ENCODE measurements at regions of chr9 and their contacts with region 1.

Region 1: GRCh38 chr9:7592321-7593316 is 207.0 kb downstream of the DMAC1 start:
- ATAC-seq: peak in 1 of 8 experiments; percentile 33
- H3K4me3 ChIP-seq: no peak overlapping the region
- H3K27ac ChIP-seq: no peak overlapping the region
- H3K4me1 ChIP-seq: peaks cover 0 to 14% of the 10 kb centered on the region in 2 donors

Region 2: GRCh38 chr9:7394007-7394774 is 198.4 kb before region 1 on chr9:
- in situ Hi-C with region 1: no loop called
- ATAC-seq: peak in 5 of 8 experiments; percentile 40 to 99 (median 64)
- H3K4me3 ChIP-seq: no peak overlapping the region
- H3K27ac ChIP-seq: no peak overlapping the region
- H3K4me1 ChIP-seq: peaks cover 5 to 41% of the 10 kb centered on the region in 2 donors

Region 3: GRCh38 chr9:7676609-7677156 is 84.1 kb after region 1 on chr9:
- in situ Hi-C with region 1: loop called in 1 of 9 experiments (anchors 25 kb)
- ATAC-seq: peak in 1 of 8 experiments; percentile 64
- H3K4me3 ChIP-seq: no peak overlapping the region
- H3K27ac ChIP-seq: no peak overlapping the region
- H3K4me1 ChIP-seq: no peaks in the 10 kb centered on the region

Region 4: GRCh38 chr9:7828334-7828733 is 235.7 kb after region 1 on chr9:
- in situ Hi-C with region 1: no loop called
- ATAC-seq: no peak
- H3K4me3 ChIP-seq: no peak overlapping the region
- H3K27ac ChIP-seq: no peak overlapping the region
- H3K4me1 ChIP-seq: no peaks in the 10 kb centered on the region